Activated CD8-positive, alpha-beta T cell treated with anti-CD3 and anti-CD28 coated beads, Interleukin-2, amount 10 ng/mL, durations not matched to agents 7 days and 5 days (primary cell): ENCODE measurements at regions of chr1 and their contacts with region 1.

Region 1: GRCh38 chr1:153510984-153511410 is 24.8 kb downstream of the S100A6 start:
- DNase-seq: peak; percentile 87
- ATAC-seq: peak; percentile 92
- H3K4me3 Mint-ChIP-seq: no peak overlapping the region
- H3K27ac Mint-ChIP-seq: peak overlapping the region; percentile 51
- H3K4me1 Mint-ChIP-seq: peaks cover 14% of the 10 kb centered on the region
- H3K27me3 Mint-ChIP-seq: no peaks in the 10 kb centered on the region

Region 2: GRCh38 chr1:153253693-153254092 is 257.3 kb before region 1 on chr1:
- CTCF ChIA-PET with region 1: no interaction called
- POLR2A ChIA-PET with region 1: no interaction called
- DNase-seq: no peak
- ATAC-seq: no peak
- H3K4me3 Mint-ChIP-seq: no peak overlapping the region
- H3K27ac Mint-ChIP-seq: no peak overlapping the region
- H3K4me1 Mint-ChIP-seq: no peaks in the 10 kb centered on the region
- H3K27me3 Mint-ChIP-seq: peaks cover 17% of the 10 kb centered on the region

Region 3: GRCh38 chr1:153447498-153448170 is 63.4 kb before region 1 on chr1:
- CTCF ChIA-PET with region 1: no interaction called
- POLR2A ChIA-PET with region 1: no interaction called
- DNase-seq: no peak
- ATAC-seq: no peak
- H3K4me3 Mint-ChIP-seq: no peak overlapping the region
- H3K27ac Mint-ChIP-seq: no peak overlapping the region
- H3K4me1 Mint-ChIP-seq: no peaks in the 10 kb centered on the region
- H3K27me3 Mint-ChIP-seq: peaks cover 18% of the 10 kb centered on the region

Region 4: DNA sequence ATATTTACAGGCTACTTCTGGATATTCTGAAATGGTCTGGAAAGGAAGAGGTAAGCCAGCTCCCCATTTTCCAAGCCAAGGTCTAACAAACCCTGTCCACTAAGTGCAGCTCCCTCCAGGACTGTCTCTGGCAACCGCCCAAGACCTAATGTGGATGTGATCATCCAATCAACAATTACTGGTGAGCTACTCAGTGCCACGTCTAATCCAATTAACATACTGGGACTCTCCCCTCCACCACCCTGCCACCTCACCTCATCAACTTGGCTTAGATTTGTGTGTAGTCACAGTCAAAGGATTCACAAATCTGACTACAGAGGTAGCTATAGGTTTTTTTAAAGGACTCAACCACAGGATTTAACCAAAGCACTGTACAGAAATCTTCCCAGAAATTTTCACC is 25.1 kb before region 1 on chr1:
- CTCF ChIA-PET with region 1: no interaction called
- POLR2A ChIA-PET with region 1: no interaction called
- DNase-seq: no peak
- ATAC-seq: no peak
- H3K4me3 Mint-ChIP-seq: no peak overlapping the region
- H3K27ac Mint-ChIP-seq: no peak overlapping the region
- H3K4me1 Mint-ChIP-seq: no peaks in the 10 kb centered on the region
- H3K27me3 Mint-ChIP-seq: peaks cover 26% of the 10 kb centered on the region

Region 5: GRCh38 chr1:153526132-153526543 is 15.1 kb after region 1 on chr1:
- CTCF ChIA-PET with region 1: interaction called, 73 read pairs
- POLR2A ChIA-PET with region 1: no interaction called
- DNase-seq: no peak
- ATAC-seq: no peak
- H3K4me3 Mint-ChIP-seq: no peak overlapping the region
- H3K27ac Mint-ChIP-seq: no peak overlapping the region
- H3K4me1 Mint-ChIP-seq: peaks cover 16% of the 10 kb centered on the region
- H3K27me3 Mint-ChIP-seq: no peaks in the 10 kb centered on the region

Region 6: GRCh38 chr1:153545067-153546055 is 34.4 kb after region 1 on chr1 and contains the start of gene S100A4:
- CTCF ChIA-PET with region 1: interaction called, 33 read pairs
- POLR2A ChIA-PET with region 1: no interaction called
- DNase-seq: peak; percentile 95
- ATAC-seq: peak; percentile 84
- H3K4me3 Mint-ChIP-seq: peak within 1 kb of the TSS; percentile 93
- H3K27ac Mint-ChIP-seq: peak within 1 kb of the TSS; percentile 97
- H3K4me1 Mint-ChIP-seq: peaks cover 83% of the 10 kb centered on the region
- H3K27me3 Mint-ChIP-seq: peaks cover 3% of the 10 kb centered on the region
- total RNA-seq, gene S100A4: 628 to 665 TPM

Region 7: GRCh38 chr1:153566440-153567379 is 55.7 kb after region 1 on chr1:
- CTCF ChIA-PET with region 1: interaction called, 173 read pairs
- POLR2A ChIA-PET with region 1: interaction called, 5 read pairs
- DNase-seq: peak; percentile 83
- ATAC-seq: peak; percentile 82
- H3K4me3 Mint-ChIP-seq: no peak overlapping the region
- H3K27ac Mint-ChIP-seq: peak overlapping the region; percentile 92
- H3K4me1 Mint-ChIP-seq: peaks cover 38% of the 10 kb centered on the region
- H3K27me3 Mint-ChIP-seq: peaks cover 11% of the 10 kb centered on the region

Region 8: DNA sequence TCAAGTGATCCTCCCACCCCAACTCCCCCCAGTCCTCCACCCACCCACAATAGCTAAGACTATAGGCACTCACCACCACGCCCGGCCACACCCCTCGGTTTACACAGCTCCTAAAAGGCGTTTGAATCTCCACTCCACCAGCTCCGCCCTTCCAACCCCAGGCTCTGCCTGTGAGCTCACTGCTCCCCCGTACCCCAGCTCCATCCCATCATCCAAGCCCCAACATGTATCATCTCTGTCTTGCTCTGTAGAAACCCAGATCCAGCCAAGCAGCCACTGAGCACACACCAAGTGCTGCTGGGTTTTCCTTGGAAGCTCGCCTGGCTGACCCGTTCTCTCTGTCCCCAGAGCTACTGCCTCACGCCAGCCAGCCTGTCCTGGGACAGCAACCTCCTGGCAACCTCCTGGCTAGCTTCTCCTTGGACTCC is 66.6 kb after region 1 on chr1:
- CTCF ChIA-PET with region 1: interaction called, 173 read pairs
- POLR2A ChIA-PET with region 1: no interaction called
- DNase-seq: no peak
- ATAC-seq: no peak
- H3K4me3 Mint-ChIP-seq: no peak overlapping the region
- H3K27ac Mint-ChIP-seq: no peak overlapping the region
- H3K4me1 Mint-ChIP-seq: peaks cover 9% of the 10 kb centered on the region
- H3K27me3 Mint-ChIP-seq: peaks cover 24% of the 10 kb centered on the region

Region 9: GRCh38 chr1:153617675-153618074 is 106.7 kb after region 1 on chr1:
- CTCF ChIA-PET with region 1: interaction called, 120 read pairs
- POLR2A ChIA-PET with region 1: no interaction called
- DNase-seq: peak; percentile 86
- ATAC-seq: peak; percentile 98
- H3K4me3 Mint-ChIP-seq: no peak overlapping the region
- H3K27ac Mint-ChIP-seq: peak overlapping the region; percentile 30
- H3K4me1 Mint-ChIP-seq: peaks cover 9% of the 10 kb centered on the region
- H3K27me3 Mint-ChIP-seq: no peaks in the 10 kb centered on the region

Region 10: DNA sequence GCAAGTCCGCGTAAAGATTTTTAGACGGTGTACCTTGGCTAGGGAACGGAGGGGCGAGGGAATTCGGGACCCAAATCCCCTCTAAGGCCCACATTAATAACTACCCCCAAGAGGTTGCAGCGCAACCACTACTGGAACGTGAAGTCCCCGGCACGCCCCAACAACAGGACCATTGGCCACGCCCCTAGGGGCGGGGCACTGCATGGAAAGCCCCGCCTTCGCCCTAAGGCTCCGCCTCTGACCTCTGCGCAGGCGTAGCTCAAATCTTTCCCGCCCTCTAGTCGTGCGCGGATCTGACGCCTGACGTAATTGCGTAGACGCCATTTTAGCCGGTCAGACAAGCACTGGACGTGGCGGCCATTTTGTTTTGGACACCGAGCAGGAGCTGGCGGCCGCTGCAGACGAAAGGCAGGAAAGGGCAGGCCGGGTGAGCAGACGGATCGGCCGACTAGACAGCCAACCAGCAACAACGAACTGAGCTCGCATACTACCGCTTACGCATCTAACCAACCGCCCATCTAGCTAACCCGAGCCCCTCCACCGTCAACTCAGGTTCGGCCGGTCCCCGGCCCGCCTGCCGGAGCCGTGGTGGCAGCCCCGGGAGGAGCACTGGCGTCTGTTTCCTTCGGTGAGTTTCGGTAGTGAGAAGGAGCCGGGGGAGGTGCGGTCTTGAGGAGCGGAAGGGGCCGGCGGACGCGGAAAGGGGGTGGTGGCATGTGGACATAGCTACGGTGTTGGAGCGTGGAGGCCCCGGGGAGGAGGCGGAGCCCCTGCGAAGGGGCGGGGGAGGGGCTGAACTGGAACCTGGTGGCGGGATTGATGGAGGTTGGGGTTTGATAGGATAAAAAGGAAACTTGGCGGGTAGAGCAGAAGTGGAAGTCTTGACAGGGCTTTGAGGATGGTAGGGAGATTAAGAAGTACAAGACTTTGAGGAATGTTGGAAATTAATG is 123.0 kb after region 1 on chr1 and contains the start of gene CHTOP:
- CTCF ChIA-PET with region 1: interaction called, 16 read pairs
- POLR2A ChIA-PET with region 1: interaction called, 3 read pairs
- DNase-seq: peak; percentile 98
- ATAC-seq: peak; percentile 94
- H3K4me3 Mint-ChIP-seq: peak within 1 kb of the TSS; percentile 99
- H3K27ac Mint-ChIP-seq: peak within 1 kb of the TSS; percentile 100
- H3K4me1 Mint-ChIP-seq: peaks cover 39% of the 10 kb centered on the region
- H3K27me3 Mint-ChIP-seq: no peaks in the 10 kb centered on the region
- total RNA-seq, gene CHTOP: 81.9 to 82.0 TPM